Caco-2 (cell line): ENCODE measurements at regions of chr4 and their contacts with region 1.

Region 1: DNA sequence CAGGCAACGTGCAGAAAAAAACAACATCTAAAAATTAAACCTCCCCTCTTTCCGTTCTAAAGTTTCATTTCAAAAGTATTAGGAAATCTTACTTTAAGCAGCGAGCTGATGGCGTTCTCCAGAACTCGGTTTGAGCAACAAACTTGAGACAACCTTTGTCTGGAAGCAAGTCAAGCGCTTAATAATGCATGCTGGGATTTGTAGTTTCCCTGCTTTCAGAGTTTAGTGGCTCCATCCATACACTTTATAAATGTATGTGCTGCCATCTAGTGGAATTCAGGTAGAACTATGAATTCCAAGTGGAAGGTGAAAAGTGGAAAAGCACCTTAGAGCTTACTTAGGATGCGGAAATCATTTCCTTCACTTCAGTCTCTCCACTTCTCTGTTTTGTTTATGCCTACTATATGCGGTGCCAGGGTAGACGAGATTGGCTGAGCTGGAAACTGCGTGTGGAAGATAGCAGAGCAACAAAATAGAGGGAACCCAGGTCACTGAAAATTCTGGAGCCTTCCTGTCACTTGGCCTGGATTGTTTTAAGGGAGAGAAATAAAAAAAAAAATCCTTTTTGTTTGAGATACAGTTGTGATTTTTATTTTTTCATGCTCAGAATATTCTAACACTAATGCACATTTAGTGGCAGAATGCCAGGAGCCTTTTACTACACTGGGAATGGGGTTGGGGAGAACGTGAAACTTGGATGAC is at the start of gene BDH2:
- DNase-seq: peak; percentile 57 to 67
- H3K4me3 ChIP-seq: peak within 1 kb of the TSS; percentile 31
- H3K4me3 Mint-ChIP-seq: peak within 1 kb of the TSS; percentile 71
- H3K27ac Mint-ChIP-seq: peak within 1 kb of the TSS; percentile 18
- H3K4me1 ChIP-seq: 0 out of 2 replicates have a peak, but pooled peaks cover 8% of the 10 kb centered on the region
- H3K4me1 Mint-ChIP-seq: peaks cover 7% of the 10 kb centered on the region
- H3K27me3 ChIP-seq: no peaks in the 10 kb centered on the region
- H3K27me3 Mint-ChIP-seq: no peaks in the 10 kb centered on the region
- CTCF ChIP-seq: peak; percentile 45 to 54
- total RNA-seq, gene BDH2: 17.4 and 19.7 TPM in 2 replicates

Region 2: DNA sequence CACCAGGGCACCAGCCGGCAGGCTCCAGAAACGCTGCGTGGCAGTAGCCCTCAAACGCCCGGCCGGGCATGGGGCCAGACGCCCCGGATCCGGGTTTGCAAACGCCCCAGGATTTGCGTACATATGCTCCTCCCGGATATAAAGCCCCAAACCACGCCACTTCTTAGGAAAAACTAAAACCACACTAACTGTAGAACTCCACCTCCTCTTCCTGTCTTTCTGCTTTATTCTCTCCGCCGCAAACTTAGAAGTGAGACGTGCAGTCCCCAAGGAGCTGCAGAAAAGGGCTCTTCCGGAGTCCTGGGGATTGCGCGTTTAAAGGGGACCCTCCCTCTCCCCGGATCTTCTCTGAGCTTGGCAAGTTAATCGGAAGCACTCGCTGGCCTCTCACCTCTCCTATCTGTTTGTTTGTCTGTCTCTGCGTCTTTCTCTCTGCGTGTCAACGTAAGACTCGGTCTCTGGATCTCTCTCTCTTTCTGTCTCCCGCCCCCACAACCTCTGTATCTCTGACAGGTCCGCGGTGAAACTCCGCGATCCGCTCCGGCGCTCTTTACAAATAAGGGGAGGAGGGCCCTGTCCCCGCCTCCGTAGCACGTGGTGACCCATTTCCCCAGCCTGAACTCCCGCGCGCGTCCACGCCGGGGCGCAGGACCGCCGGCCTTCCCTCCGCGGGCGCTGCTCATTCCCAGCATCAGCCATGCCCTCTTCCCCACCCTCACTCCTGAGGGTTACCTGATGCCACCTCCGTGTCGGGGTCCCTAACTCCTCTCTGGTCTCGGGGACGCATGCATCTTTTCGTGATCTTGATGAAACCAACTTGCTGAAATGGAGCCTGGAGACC is 754.7 kb before region 1 on chr4 and contains the start of gene SLC39A8:
- CTCF ChIA-PET with region 1: no interaction called
- POLR2A ChIA-PET with region 1: no interaction called
- intact Hi-C with region 1: loop called (anchors 10 kb)
- DNase-seq: peak; percentile 85 to 90
- H3K4me3 ChIP-seq: peak within 1 kb of the TSS; percentile 42
- H3K4me3 Mint-ChIP-seq: peak within 1 kb of the TSS; percentile 81
- H3K27ac Mint-ChIP-seq: peak within 1 kb of the TSS; percentile 45
- H3K4me1 ChIP-seq: peaks cover 19% of the 10 kb centered on the region; the same call in 1 of the 2 replicates
- H3K4me1 Mint-ChIP-seq: peaks cover 9% of the 10 kb centered on the region
- H3K27me3 ChIP-seq: no peaks in the 10 kb centered on the region; the same call in 1 of the 2 replicates
- H3K27me3 Mint-ChIP-seq: peaks cover 7% of the 10 kb centered on the region
- CTCF ChIP-seq: peak; percentile 73
- total RNA-seq, gene SLC39A8: 14.1 and 15.5 TPM in 2 replicates

Region 3: DNA sequence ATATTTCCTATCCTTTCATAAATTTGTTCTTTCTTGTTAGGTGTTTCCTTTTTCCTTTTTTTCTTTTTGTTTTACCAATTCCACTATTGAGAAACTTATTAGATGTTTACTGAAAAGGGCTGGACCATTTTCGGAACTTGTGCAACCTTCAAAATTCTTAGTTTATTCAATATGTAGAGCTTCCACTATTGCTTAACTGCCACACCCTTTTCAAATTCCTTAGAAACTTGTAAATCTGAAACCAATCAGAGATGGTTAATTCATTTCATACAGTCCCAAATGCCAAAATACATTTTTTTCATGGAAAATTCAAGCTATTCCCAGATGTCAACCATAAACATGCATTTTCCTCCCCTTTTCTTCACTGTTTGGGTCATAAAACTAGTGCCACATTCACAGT is 688.4 kb before region 1 on chr4:
- CTCF ChIA-PET with region 1: no interaction called
- POLR2A ChIA-PET with region 1: no interaction called
- intact Hi-C with region 1: no loop called
- DNase-seq: no peak
- H3K4me3 ChIP-seq: no peak overlapping the region
- H3K4me3 Mint-ChIP-seq: no peak overlapping the region
- H3K27ac Mint-ChIP-seq: no peak overlapping the region
- H3K4me1 ChIP-seq: no peaks in the 10 kb centered on the region
- H3K4me1 Mint-ChIP-seq: peaks cover 5% of the 10 kb centered on the region
- H3K27me3 ChIP-seq: no peaks in the 10 kb centered on the region
- H3K27me3 Mint-ChIP-seq: no peaks in the 10 kb centered on the region
- CTCF ChIP-seq: no peak

Region 4: GRCh38 chr4:102449751-102450352 is 650.0 kb before region 1 on chr4:
- CTCF ChIA-PET with region 1: no interaction called
- POLR2A ChIA-PET with region 1: no interaction called
- intact Hi-C with region 1: loop called (anchors 2 kb)
- DNase-seq: peak; percentile 43 to 64
- H3K4me3 ChIP-seq: no peak overlapping the region
- H3K4me3 Mint-ChIP-seq: no peak overlapping the region
- H3K27ac Mint-ChIP-seq: no peak overlapping the region
- H3K4me1 ChIP-seq: no peaks in the 10 kb centered on the region
- H3K4me1 Mint-ChIP-seq: no peaks in the 10 kb centered on the region
- H3K27me3 ChIP-seq: no peaks in the 10 kb centered on the region
- H3K27me3 Mint-ChIP-seq: no peaks in the 10 kb centered on the region
- CTCF ChIP-seq: peak; percentile 59 to 66

Region 5: GRCh38 chr4:103019308-103020124 is 80.3 kb before region 1 on chr4 and contains the start of gene SLC9B1:
- CTCF ChIA-PET with region 1: interaction called, 3 read pairs
- POLR2A ChIA-PET with region 1: no interaction called
- intact Hi-C with region 1: loop called (anchors 1 kb)
- DNase-seq: peak; percentile 95 to 97
- H3K4me3 ChIP-seq: peak within 1 kb of the TSS; percentile 49
- H3K4me3 Mint-ChIP-seq: peak within 1 kb of the TSS; percentile 99
- H3K27ac Mint-ChIP-seq: peak within 1 kb of the TSS; percentile 99
- H3K4me1 ChIP-seq: no peaks in the 10 kb centered on the region
- H3K4me1 Mint-ChIP-seq: peaks cover 8% of the 10 kb centered on the region
- H3K27me3 ChIP-seq: no peaks in the 10 kb centered on the region
- H3K27me3 Mint-ChIP-seq: no peaks in the 10 kb centered on the region
- CTCF ChIP-seq: no peak
- total RNA-seq, gene SLC9B1: 1.7 TPM in 1 of 2 replicates, not detected in the other

Region 6: DNA sequence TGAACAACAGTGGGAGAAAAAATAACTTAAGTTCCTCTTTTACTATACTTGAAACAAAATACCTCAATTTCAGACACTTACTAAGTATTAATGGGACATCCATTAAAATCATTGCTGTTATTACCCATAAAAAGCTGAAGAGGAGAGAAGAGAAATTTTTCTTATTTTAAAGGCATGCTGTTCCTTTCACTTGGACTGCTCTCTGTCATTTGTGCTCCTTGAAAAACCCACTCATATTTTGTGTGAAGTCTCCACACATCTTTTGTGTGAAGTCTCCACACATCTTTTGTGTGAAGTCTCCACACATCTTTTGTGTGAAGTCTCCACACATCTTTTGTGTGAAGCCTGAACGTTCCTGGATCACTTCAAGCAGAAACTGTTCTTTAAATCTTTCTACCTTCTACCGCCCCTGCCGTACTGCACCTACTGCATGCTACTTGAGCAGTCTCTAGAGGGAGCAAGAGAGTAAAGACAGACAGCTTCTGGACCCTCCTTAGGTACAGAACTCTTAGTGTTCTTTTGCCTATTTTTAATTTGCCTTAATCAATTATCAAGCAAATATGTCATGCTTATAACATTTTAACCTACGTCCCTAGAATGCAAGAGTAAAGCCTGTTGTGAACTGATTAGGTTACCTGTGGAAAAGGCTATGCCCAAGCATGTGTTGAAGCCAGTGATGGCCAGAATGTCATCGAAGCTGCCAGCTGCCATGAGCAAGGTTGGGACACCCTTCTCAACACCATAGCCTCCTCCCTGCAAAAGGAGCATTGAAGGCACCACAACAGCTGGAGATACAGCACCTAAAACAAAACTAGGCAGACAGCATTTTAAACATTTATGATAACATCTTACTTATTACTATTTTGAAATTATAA is 53.2 kb before region 1 on chr4:
- CTCF ChIA-PET with region 1: interaction called, 5 read pairs
- POLR2A ChIA-PET with region 1: no interaction called
- intact Hi-C with region 1: loop called (anchors 2 kb)
- DNase-seq: peak; percentile 43 to 57
- H3K4me3 ChIP-seq: no peak overlapping the region
- H3K4me3 Mint-ChIP-seq: no peak overlapping the region
- H3K27ac Mint-ChIP-seq: no peak overlapping the region
- H3K4me1 ChIP-seq: no peaks in the 10 kb centered on the region
- H3K4me1 Mint-ChIP-seq: no peaks in the 10 kb centered on the region
- H3K27me3 ChIP-seq: no peaks in the 10 kb centered on the region
- H3K27me3 Mint-ChIP-seq: no peaks in the 10 kb centered on the region
- CTCF ChIP-seq: peak; percentile 69 to 82

Region 7: DNA sequence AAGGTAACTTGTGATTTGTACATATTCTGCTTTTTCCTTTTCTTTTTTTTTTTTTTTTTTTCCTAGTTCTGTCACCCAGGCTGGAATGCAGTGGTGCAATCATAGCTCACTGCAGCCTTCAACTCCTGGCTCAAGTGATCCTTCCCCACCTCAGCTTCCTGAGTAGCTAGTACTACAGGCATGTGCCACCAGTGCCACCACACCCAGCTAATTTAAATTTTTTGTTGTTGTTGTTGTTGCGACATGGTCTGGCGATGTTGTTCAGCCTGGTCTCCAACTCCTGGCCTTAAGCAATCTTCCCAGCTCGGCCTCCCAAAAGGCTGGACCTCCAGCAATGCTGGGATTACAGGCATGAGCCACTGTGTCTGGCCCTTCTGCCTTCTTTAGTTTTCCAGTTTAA is 621.4 kb after region 1 on chr4:
- CTCF ChIA-PET with region 1: no interaction called
- POLR2A ChIA-PET with region 1: interaction called, 13 read pairs
- intact Hi-C with region 1: no loop called
- DNase-seq: no peak
- H3K4me3 ChIP-seq: no peak overlapping the region
- H3K4me3 Mint-ChIP-seq: no peak overlapping the region
- H3K27ac Mint-ChIP-seq: no peak overlapping the region
- H3K4me1 ChIP-seq: no peaks in the 10 kb centered on the region
- H3K4me1 Mint-ChIP-seq: peaks cover 4% of the 10 kb centered on the region
- H3K27me3 ChIP-seq: no peaks in the 10 kb centered on the region
- H3K27me3 Mint-ChIP-seq: peaks cover 3% of the 10 kb centered on the region
- CTCF ChIP-seq: no peak

Region 8: DNA sequence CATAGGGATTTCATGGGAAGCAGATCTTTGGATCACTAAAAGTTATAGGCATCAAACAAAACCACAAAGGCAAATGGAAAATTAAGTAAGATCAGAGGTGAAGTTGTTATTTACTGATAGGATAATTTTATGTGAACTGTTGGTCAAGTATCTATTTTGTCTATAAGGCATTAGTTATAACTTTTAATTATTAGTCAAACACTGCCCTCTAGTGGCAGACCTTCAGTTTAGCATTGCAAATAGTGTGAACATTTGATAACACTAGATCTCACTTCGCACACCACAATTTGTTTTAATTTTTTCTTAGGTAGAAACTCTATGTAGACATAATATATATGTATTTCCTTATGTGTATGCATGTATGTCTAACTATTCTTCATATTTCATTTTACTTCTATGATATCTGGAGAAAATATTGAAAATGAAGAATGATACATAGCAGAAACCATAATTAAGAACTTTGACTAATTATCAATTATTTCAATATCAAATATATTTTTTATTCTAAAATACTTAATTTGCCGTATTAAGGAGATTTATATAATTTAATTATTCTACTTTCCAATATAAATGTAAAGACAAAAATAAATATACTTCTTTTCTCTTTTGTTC is 834.4 kb after region 1 on chr4:
- CTCF ChIA-PET with region 1: interaction called, 4 read pairs
- POLR2A ChIA-PET with region 1: no interaction called
- intact Hi-C with region 1: loop called (anchors 10 kb)
- DNase-seq: peak in 1 of 2 experiments; percentile 34
- H3K4me3 ChIP-seq: no peak overlapping the region
- H3K4me3 Mint-ChIP-seq: no peak overlapping the region
- H3K27ac Mint-ChIP-seq: no peak overlapping the region
- H3K4me1 ChIP-seq: no peaks in the 10 kb centered on the region
- H3K4me1 Mint-ChIP-seq: no peaks in the 10 kb centered on the region
- H3K27me3 ChIP-seq: no peaks in the 10 kb centered on the region
- H3K27me3 Mint-ChIP-seq: no peaks in the 10 kb centered on the region
- CTCF ChIP-seq: peak; percentile 62 to 66